H1 (cell line): ENCODE measurements at regions of chr2 and their contacts with region 1.

Region 1: GRCh38 chr2:176151442-176152369 is at the start of gene HOXD4:
- DNase-seq: peak in 1 of 2 experiments; percentile 60
- H3K4me3 ChIP-seq: peak within 1 kb of the TSS in 1 of 4 experiments; percentile 45; a peak in 2 of 8 replicates
- H3K27ac ChIP-seq: no peak within 1 kb of the TSS
- H3K4me1 ChIP-seq: peaks cover 0 to 10% (median 2%) of the 10 kb centered on the region in 4 experiments; a peak in 4 of 7 replicates
- H3K27me3 ChIP-seq: peaks cover 97 to 100% (median 100%) of the 10 kb centered on the region in 4 experiments
- CTCF ChIP-seq: no peak
- EP300 ChIP-seq: no peak
- POLR2A ChIP-seq: no peak
- RAD21 ChIP-seq: no peak
- total RNA-seq, gene HOXD4: not detected in 2 replicates

Region 2: DNA sequence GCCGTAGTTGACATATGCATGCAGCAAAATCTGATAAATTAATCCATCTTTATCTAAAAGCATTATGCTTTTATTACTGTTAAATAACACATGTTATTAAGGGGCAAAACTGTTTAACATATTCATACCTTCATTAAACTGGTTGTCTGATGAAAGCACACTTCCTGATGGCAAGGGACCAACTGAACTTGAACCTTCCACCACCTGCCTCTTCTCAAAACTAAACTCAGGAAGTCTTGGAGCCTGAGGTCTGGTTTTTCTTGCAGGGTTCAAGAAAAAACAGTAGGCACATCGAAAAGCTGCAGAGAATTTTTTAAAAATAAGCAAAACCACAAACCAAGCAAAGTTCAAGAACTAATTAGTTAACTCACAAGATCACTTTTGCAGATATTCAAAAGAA is 214.5 kb before region 1 on chr2:
- CTCF ChIA-PET with region 1: no interaction called
- POLR2A ChIA-PET with region 1: no interaction called
- DNase-seq: no peak
- H3K4me3 ChIP-seq: no peak overlapping the region
- H3K27ac ChIP-seq: no peak overlapping the region
- H3K4me1 ChIP-seq: no peaks in the 10 kb centered on the region
- H3K27me3 ChIP-seq: no peaks in the 10 kb centered on the region
- CTCF ChIP-seq: no peak
- EP300 ChIP-seq: no peak
- POLR2A ChIP-seq: no peak
- RAD21 ChIP-seq: no peak

Region 3: DNA sequence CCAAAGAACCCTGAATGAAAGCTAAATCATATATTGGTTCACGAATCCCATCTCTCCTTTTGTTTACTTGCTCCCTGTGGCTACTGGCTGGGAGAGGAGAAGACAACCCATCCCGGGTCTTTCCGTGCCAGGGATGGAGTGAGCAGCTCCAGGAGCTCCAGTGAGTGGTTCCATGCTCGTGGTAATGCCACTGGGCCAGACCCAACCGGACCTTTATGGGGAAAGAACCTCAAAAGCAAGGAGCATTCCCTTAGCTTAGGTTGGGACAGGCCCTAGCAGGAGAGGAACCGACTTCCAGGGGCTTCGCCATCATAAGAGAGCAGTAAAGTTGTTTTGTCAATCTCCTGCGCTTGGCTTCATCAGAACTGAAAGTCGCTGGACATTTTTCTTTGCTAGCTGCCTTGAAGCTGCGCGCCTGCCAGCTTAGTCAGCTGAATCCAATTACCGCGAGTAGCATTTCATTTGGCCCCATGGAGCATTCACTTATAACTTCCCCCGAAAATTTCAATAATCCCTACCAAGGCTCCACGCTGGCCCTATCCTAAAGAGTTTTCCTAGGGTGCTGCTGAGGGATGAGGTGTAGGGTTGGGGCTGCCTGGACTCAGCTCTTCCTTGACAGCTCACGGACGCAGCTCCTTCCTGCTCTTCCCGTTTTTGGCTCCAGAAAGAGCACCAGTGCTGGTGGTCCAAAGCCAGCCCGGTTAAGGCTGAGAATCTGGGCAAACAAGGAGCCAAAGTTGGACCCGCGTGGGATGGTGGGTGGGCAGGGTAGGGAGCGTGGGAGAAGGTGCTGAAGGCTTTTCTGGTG is 10.3 kb after region 1 on chr2:
- CTCF ChIA-PET with region 1: interaction called, 17 read pairs
- POLR2A ChIA-PET with region 1: no interaction called
- DNase-seq: no peak
- H3K4me3 ChIP-seq: no peak overlapping the region
- H3K27ac ChIP-seq: no peak overlapping the region
- H3K4me1 ChIP-seq: peaks cover 0 to 12% (median 6%) of the 10 kb centered on the region in 4 experiments; a peak in 5 of 7 replicates
- H3K27me3 ChIP-seq: peaks cover 98 to 100% (median 100%) of the 10 kb centered on the region in 4 experiments
- CTCF ChIP-seq: no peak
- EP300 ChIP-seq: no peak
- POLR2A ChIP-seq: no peak
- RAD21 ChIP-seq: no peak

Region 4: DNA sequence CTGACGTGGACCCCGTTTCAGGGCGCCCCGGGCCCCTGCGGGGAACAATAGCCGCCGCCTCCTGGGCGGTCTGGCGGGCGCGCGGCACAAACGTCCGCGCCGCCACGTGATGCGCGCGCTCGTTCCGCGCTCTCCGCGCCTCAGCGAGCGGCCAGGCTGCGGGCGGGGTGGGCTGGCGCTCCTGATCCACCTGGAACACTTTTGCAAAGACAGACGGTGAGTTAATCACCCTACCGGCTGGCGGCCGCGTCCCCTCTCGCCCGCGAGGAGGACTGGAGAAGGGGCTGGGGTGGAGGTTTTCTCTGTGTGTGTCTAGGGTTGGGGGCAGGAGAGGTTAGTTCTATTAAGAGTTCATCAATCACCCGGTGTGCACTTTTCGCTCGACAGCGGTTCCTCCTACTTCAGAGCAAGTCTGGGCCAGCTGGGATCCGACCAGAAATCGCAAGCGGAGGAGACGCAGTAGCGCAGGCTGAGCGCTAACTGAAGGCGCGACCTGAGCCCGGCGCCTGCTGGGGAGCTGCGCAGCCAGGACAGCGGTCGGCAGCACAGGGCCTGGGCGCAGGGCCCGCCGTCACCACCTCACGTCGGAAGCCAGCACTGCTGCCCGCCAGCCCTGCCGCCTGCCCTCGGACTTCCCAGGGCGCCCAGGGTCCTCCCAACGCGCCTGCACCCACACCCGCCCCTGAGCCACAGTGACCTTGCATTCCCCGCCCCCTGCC is 26.5 kb after region 1 on chr2:
- CTCF ChIA-PET with region 1: interaction called, 10 read pairs
- POLR2A ChIA-PET with region 1: no interaction called
- DNase-seq: peak in 1 of 2 experiments; percentile 74
- H3K4me3 ChIP-seq: peak overlapping the region; percentile 24 to 56 (median 34); a peak in 6 of 8 replicates
- H3K27ac ChIP-seq: no peak overlapping the region
- H3K4me1 ChIP-seq: peaks cover 3 to 17% (median 7%) of the 10 kb centered on the region in 4 experiments
- H3K27me3 ChIP-seq: peaks cover 92 to 99% (median 97%) of the 10 kb centered on the region in 4 experiments
- CTCF ChIP-seq: no peak
- EP300 ChIP-seq: no peak
- POLR2A ChIP-seq: no peak
- RAD21 ChIP-seq: 0 out of 4 replicates have a peak, but pooled peaks of 1 of the 2 experiments have one; percentile 4

Region 5: DNA sequence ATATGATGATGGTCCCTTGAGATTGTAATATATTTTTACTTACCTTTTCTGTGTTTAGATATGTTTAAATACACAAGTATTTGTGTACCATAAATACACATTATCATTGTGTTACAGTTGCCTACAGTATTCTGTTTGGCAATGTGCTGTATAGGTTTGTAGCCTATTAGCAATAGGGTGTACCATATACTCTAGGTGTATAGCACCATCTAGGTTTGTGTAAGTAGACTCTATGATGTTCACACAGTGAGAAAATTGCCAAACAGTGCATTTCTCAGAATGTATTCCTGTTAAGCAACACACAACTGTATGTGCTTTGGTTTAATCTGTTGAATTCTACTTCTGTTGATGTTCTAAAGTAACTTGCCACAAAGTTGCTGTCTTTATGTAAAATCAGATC is 182.0 kb after region 1 on chr2:
- CTCF ChIA-PET with region 1: no interaction called
- POLR2A ChIA-PET with region 1: no interaction called
- DNase-seq: no peak
- H3K4me3 ChIP-seq: no peak overlapping the region
- H3K27ac ChIP-seq: no peak overlapping the region
- H3K4me1 ChIP-seq: peaks cover 0 to 4% (median under 1%) of the 10 kb centered on the region in 4 experiments; a peak in 1 of 7 replicates
- H3K27me3 ChIP-seq: no peaks in the 10 kb centered on the region
- CTCF ChIP-seq: no peak
- EP300 ChIP-seq: no peak
- POLR2A ChIP-seq: no peak
- RAD21 ChIP-seq: no peak